Tibial artery (tissue), 4 donors: ENCODE measurements at regions of chr5 and their contacts with region 1.

Region 1: GRCh38 chr5:77867194-77867691 is 91.1 kb upstream of the TBCA start:
- DNase-seq: no peak
- H3K4me3 ChIP-seq: no peak overlapping the region
- H3K27ac ChIP-seq: no peak overlapping the region
- H3K4me1 ChIP-seq: no peaks in the 10 kb centered on the region
- H3K27me3 ChIP-seq: peaks cover 0 to 3% of the 10 kb centered on the region in 2 donors
- CTCF ChIP-seq: peak; percentile 34 to 45

Region 2: GRCh38 chr5:77775790-77776553 is 91.3 kb before region 1 on chr5 and contains the start of gene TBCA:
- intact Hi-C with region 1: no loop called
- DNase-seq: peak; percentile 81 to 93
- H3K4me3 ChIP-seq: peak within 1 kb of the TSS; percentile 76 to 86
- H3K27ac ChIP-seq: peak within 1 kb of the TSS; percentile 97
- H3K4me1 ChIP-seq: peaks cover 0 to 43% (median 18%) of the 10 kb centered on the region in 4 donors
- H3K27me3 ChIP-seq: no peaks in the 10 kb centered on the region
- CTCF ChIP-seq: peak in 1 of 2 experiments; percentile 32

Region 3: DNA sequence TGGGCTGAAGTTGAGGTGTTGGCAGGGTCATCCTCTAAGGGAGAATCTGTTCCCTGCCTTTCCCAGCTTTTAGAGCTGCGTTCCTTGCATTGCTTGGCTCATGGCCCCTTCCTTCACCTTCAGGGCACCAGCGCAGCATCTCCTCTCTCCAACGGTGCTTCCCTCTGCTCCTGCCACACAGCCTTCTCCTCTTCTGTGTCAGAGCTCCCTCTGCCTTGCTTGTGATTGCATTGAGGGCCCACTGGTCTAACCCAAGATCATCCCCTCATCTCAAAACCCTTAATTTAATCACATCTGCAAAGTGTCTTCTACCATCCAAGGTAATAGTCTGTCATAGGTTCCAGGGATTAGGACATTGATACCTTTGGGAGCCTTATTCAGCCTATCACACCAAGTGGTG is 114.6 kb after region 1 on chr5:
- intact Hi-C with region 1: no loop called
- DNase-seq: no peak
- H3K4me3 ChIP-seq: no peak overlapping the region
- H3K27ac ChIP-seq: no peak overlapping the region
- H3K4me1 ChIP-seq: peaks cover 0 to 28% (median 12%) of the 10 kb centered on the region in 4 donors
- H3K27me3 ChIP-seq: no peaks in the 10 kb centered on the region
- CTCF ChIP-seq: no peak

Region 4: GRCh38 chr5:78009937-78010527 is 142.8 kb after region 1 on chr5:
- intact Hi-C with region 1: loop called (anchors 5 kb)
- DNase-seq: no peak
- H3K4me3 ChIP-seq: peak overlapping the region in 1 of 2 donors; percentile 12
- H3K27ac ChIP-seq: peak overlapping the region; percentile 14 to 47
- H3K4me1 ChIP-seq: peaks cover 0 to 21% (median 3%) of the 10 kb centered on the region in 4 donors
- H3K27me3 ChIP-seq: no peaks in the 10 kb centered on the region
- CTCF ChIP-seq: peak in 1 of 2 experiments; percentile 31

Region 5: DNA sequence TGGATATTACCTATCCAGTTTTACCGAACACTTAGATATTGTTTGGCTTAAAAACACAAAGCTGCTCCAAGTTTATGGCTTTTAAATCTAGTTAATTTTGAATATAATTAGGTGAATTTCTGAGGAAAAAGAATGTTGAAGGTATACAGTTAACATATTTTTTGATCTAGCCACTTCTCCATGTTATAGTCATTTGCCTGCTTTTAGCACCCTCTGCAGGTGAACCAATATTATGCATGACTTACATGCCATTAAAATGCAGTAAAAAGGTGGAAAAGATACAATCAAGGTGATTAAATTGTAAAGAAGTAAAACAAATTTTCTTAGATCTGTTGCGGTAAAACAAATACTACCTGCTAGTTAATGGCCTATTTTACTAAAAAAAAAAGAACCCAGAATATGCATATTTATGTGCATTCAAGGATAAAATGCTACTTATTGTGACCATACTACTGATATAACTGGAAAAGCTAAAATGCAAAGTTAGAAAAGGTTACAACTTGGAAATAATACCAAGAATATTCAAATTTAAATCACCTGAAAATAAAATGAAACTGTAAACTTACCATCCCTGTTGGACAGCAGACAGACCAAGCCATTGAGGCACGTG is 295.1 kb after region 1 on chr5:
- intact Hi-C with region 1: loop called (anchors 5 kb)
- DNase-seq: no peak
- H3K4me3 ChIP-seq: no peak overlapping the region
- H3K27ac ChIP-seq: no peak overlapping the region
- H3K4me1 ChIP-seq: no peaks in the 10 kb centered on the region
- H3K27me3 ChIP-seq: no peaks in the 10 kb centered on the region
- CTCF ChIP-seq: peak; percentile 27 to 44

Region 6: DNA sequence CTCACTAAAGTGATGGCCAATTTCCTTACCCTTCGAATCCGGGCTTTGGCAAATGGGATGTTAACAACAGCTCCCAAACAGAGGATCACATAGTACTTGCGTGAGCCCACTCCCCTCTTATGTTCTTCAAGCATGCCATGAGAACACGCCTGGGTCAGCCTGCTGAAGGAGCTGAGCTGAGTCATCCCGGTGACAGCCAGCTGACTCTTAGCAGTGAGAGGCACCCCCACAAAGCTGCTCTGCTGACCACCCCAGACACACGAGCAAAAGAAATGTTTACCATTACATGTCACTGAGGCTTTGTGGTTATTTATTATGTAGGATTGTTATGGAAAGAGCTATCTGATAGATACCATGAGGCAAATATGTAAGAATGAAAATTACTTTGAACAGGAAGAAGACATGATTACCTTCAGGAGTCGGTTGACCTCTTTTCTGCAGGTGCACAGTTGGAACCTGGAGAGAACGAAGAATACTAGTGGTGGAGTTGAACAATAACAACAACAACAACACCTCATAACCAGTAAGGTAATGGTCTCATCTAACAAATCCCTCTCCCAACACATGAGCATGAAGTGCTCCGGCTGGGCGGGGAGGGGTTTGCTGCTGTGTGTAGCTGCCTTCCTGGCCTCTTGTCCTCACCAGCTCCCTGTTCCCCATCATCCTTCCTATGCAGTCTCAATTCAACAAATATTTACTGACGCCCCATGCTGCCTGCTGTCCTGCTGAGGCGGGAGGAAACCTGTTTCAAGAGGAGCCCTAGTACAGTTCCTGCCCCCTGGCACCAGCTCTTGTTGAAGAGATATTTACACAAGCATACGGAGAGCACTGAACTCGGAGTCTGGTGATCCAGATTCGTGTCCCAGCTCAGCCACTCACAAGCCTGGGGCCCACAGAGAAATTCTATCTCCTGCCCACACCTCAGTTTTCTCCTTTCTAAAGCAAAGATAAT is 850.7 kb after region 1 on chr5:
- intact Hi-C with region 1: no loop called
- DNase-seq: no peak
- H3K4me3 ChIP-seq: no peak overlapping the region
- H3K27ac ChIP-seq: no peak overlapping the region
- H3K4me1 ChIP-seq: peaks cover 0 to 29% (median 12%) of the 10 kb centered on the region in 4 donors
- H3K27me3 ChIP-seq: no peaks in the 10 kb centered on the region
- CTCF ChIP-seq: no peak